GM12878 (cell line): ENCODE measurements at regions of chr4 and their contacts with region 1.

Region 1: GRCh38 chr4:153432968-153433753 is 33.0 kb upstream of the TMEM131L start:
- DNase-seq: peak; percentile 99
- ATAC-seq: peak; percentile 91
- H3K4me3 ChIP-seq: peak overlapping the region; percentile 56
- H3K27ac ChIP-seq: peak overlapping the region; percentile 84
- H3K4me1 ChIP-seq: peaks cover 31% of the 10 kb centered on the region
- H3K27me3 ChIP-seq: no peaks in the 10 kb centered on the region
- CTCF ChIP-seq: peak; percentile 86 to 96 (median 93)
- EP300 ChIP-seq: peak; percentile 78
- POLR2A ChIP-seq: peak; percentile 57
- RAD21 ChIP-seq: peak; percentile 99

Region 2: GRCh38 chr4:153466081-153466948 is 33.2 kb after region 1 on chr4 and contains the start of gene TMEM131L:
- CTCF ChIA-PET with region 1: interaction called, 55 read pairs
- POLR2A ChIA-PET with region 1: interaction called, 16 read pairs
- RAD21 ChIA-PET with region 1: interaction called, 81 read pairs
- SMC1A ChIA-PET with region 1: interaction called, 46 read pairs
- in situ Hi-C with region 1: no loop called
- intact Hi-C with region 1: loop called (anchors 1 kb)
- DNase-seq: no peak
- ATAC-seq: peak; percentile 62
- H3K4me3 ChIP-seq: peak within 1 kb of the TSS; percentile 98
- H3K27ac ChIP-seq: peak within 1 kb of the TSS; percentile 88
- H3K4me1 ChIP-seq: peaks cover 18% of the 10 kb centered on the region
- H3K27me3 ChIP-seq: no peaks in the 10 kb centered on the region
- CTCF ChIP-seq: peak in 2 of 3 experiments; percentile 35 to 40; a peak in 3 of 6 replicates
- EP300 ChIP-seq: no peak; a peak in 1 of 4 replicates
- POLR2A ChIP-seq: peak; percentile 93
- RAD21 ChIP-seq: no peak; the same call in 1 of the 2 replicates
- polyA plus RNA-seq, gene TMEM131L: 8.5 to 9.5 TPM

Region 3: DNA sequence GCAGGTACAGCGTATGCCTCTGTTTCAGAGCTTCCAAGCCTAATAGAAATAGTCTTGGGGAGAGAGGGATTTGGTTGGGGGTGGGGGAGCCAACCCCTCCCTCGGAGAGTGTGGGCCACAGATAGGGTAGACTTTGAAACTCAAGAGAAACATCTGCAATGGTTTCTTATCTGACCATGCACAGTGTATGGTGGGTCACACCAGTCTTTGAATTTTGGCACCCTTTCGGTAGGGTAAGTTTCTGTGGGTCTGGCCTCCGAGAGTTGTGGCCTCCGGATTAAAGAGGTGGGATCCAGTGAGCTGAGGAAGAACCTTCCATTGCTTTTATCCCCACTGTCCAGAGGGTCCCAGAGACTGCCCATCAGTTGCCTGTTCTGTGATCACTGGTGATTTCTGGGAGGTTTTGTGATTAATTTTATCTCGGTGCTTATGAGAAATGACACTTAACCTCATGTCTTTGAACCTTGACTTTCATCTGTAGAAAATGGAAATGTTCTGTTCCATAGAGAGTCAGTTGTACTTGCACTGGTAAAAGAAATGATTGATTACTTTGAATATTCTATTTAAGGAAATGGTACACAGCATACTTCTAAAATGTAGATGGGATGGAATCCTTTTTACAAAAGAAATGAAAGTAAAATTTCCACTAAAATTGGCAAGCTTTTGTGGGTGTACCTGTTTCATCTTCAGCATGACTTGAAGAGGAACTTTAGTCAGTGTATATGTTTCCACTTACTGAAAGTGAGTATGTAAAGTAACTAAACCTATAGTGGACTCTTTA is 95.7 kb after region 1 on chr4:
- CTCF ChIA-PET with region 1: interaction called, 14 read pairs
- POLR2A ChIA-PET with region 1: interaction called, 6 read pairs
- RAD21 ChIA-PET with region 1: interaction called, 13 read pairs
- SMC1A ChIA-PET with region 1: interaction called, 11 read pairs
- in situ Hi-C with region 1: no loop called
- intact Hi-C with region 1: no loop called
- DNase-seq: no peak
- ATAC-seq: peak; percentile 73
- H3K4me3 ChIP-seq: peak overlapping the region; percentile 58
- H3K27ac ChIP-seq: peak overlapping the region; percentile 77
- H3K4me1 ChIP-seq: peaks cover 77% of the 10 kb centered on the region
- H3K27me3 ChIP-seq: no peaks in the 10 kb centered on the region
- CTCF ChIP-seq: no peak
- EP300 ChIP-seq: no peak
- POLR2A ChIP-seq: no peak
- RAD21 ChIP-seq: no peak

Region 4: DNA sequence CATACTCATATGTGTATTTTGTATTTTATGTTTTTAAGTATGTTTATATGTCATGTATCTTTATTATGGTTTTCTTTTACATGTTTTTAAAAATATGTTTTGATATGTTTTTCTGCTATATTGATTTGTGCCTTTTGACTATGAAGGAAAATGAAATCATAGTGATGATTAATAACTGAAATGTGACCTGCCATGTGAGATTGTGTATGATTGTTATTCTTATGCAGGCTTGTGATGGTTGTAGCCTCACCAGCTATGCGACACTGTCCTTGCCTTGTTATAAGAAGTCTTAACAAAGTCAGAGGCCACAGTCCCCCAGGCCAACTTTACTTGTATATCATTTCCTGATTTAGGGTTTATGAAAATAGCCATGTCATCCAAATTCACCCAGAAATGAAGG is 116.2 kb after region 1 on chr4:
- CTCF ChIA-PET with region 1: interaction called, 11 read pairs
- POLR2A ChIA-PET with region 1: no interaction called
- RAD21 ChIA-PET with region 1: interaction called, 5 read pairs
- SMC1A ChIA-PET with region 1: no interaction called
- in situ Hi-C with region 1: no loop called
- intact Hi-C with region 1: no loop called
- DNase-seq: no peak
- ATAC-seq: peak; percentile 70
- H3K4me3 ChIP-seq: no peak overlapping the region
- H3K27ac ChIP-seq: no peak overlapping the region
- H3K4me1 ChIP-seq: no peaks in the 10 kb centered on the region
- H3K27me3 ChIP-seq: no peaks in the 10 kb centered on the region
- CTCF ChIP-seq: no peak
- EP300 ChIP-seq: no peak
- POLR2A ChIP-seq: no peak
- RAD21 ChIP-seq: no peak

Region 5: GRCh38 chr4:153643406-153644383 is 210.5 kb after region 1 on chr4:
- CTCF ChIA-PET with region 1: interaction called, 36 read pairs
- POLR2A ChIA-PET with region 1: no interaction called
- RAD21 ChIA-PET with region 1: interaction called, 33 read pairs
- SMC1A ChIA-PET with region 1: interaction called, 21 read pairs
- in situ Hi-C with region 1: no loop called
- intact Hi-C with region 1: loop called (anchors 2 kb)
- DNase-seq: peak; percentile 50
- ATAC-seq: peak; percentile 88
- H3K4me3 ChIP-seq: no peak overlapping the region
- H3K27ac ChIP-seq: no peak overlapping the region
- H3K4me1 ChIP-seq: peaks cover 6% of the 10 kb centered on the region; the same call in 1 of the 2 replicates
- H3K27me3 ChIP-seq: no peaks in the 10 kb centered on the region
- CTCF ChIP-seq: peak; percentile 50 to 65 (median 54); a peak in 5 of 6 replicates
- EP300 ChIP-seq: no peak
- POLR2A ChIP-seq: no peak
- RAD21 ChIP-seq: peak; percentile 78